IMR-90 (cell line): ENCODE measurements at regions of chr20 and their contacts with region 1.

Region 1: GRCh38 chr20:18507218-18508021 is at the start of gene SEC23B:
- DNase-seq: peak; percentile 97
- ATAC-seq: peak; percentile 100
- H3K4me3 ChIP-seq: peak within 1 kb of the TSS; percentile 70
- H3K27ac ChIP-seq: peak within 1 kb of the TSS; percentile 72
- H3K4me1 ChIP-seq: peaks cover 4% of the 10 kb centered on the region; the same call in 1 of the 2 replicates
- H3K27me3 ChIP-seq: no peaks in the 10 kb centered on the region; the same call in 1 of the 2 replicates
- CTCF ChIP-seq: no peak
- POLR2A ChIP-seq: peak; percentile 88
- RAD21 ChIP-seq: no peak
- total RNA-seq, gene SEC23B: 65.0 and 78.9 TPM in 2 replicates

Region 2: DNA sequence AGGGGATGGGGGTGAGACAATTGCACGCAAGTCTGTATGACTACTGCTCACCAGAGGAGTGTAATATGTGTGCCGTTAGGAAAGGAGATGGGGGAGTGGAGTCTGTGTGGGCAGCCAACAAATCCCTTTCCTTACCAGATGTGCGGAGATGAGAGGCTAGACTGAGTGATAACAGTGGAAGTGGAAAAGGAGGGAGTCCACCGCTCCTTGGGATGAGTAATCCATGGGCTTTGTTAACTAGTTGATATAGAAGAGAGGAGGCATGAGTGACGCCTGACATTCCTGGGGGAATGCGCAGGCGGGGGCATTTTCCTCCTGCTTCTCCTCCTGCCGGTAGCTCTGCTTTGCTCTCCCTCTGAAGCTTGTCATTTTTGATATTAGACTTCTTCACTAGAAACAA is 46.3 kb after region 1 on chr20:
- CTCF ChIA-PET with region 1: no interaction called
- POLR2A ChIA-PET with region 1: no interaction called
- dilution Hi-C with region 1: no loop called
- in situ Hi-C with region 1: no loop called
- intact Hi-C with region 1: loop called (anchors 5 kb)
- DNase-seq: no peak
- ATAC-seq: no peak
- H3K4me3 ChIP-seq: no peak overlapping the region
- H3K27ac ChIP-seq: no peak overlapping the region
- H3K4me1 ChIP-seq: no peaks in the 10 kb centered on the region
- H3K27me3 ChIP-seq: no peaks in the 10 kb centered on the region
- CTCF ChIP-seq: no peak
- POLR2A ChIP-seq: no peak
- RAD21 ChIP-seq: no peak

Region 3: GRCh38 chr20:18578581-18578980 is 71.2 kb after region 1 on chr20:
- CTCF ChIA-PET with region 1: no interaction called
- POLR2A ChIA-PET with region 1: no interaction called
- dilution Hi-C with region 1: no loop called
- in situ Hi-C with region 1: no loop called
- intact Hi-C with region 1: no loop called
- DNase-seq: no peak
- ATAC-seq: no peak
- H3K4me3 ChIP-seq: no peak overlapping the region
- H3K27ac ChIP-seq: no peak overlapping the region
- H3K4me1 ChIP-seq: no peaks in the 10 kb centered on the region
- H3K27me3 ChIP-seq: no peaks in the 10 kb centered on the region; the same call in 1 of the 2 replicates
- CTCF ChIP-seq: no peak
- POLR2A ChIP-seq: no peak
- RAD21 ChIP-seq: no peak